HEK293 (cell line): ENCODE measurements at regions of chr11 and their contacts with region 1.

Region 1: DNA sequence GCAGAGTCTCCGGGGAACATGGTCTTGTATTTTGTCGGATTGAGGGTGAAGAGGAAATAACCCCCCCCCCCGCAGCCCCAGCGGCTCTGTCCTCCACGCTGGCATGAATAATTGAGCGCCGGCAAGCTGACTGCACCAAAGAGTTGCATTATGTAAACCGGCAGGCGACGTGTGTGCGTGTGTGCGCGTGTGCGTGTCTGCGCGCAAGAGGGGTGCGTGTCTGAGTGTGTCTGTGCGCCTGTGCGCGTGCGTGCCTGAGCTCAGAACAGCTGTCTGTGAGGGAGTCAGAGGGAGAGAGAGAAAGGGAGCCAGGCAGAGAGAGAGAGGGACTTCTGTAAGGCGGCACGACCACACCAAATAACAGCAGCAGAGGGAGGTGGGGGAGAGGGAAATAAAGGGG is 94.4 kb downstream of the SCN3B start:
- H3K4me3 ChIP-seq: no peak overlapping the region
- H3K27ac ChIP-seq: no peak overlapping the region
- H3K4me1 ChIP-seq: peaks cover 2% of the 10 kb centered on the region; the same call in 1 of the 2 replicates
- CTCF ChIP-seq: no peak

Region 2: DNA sequence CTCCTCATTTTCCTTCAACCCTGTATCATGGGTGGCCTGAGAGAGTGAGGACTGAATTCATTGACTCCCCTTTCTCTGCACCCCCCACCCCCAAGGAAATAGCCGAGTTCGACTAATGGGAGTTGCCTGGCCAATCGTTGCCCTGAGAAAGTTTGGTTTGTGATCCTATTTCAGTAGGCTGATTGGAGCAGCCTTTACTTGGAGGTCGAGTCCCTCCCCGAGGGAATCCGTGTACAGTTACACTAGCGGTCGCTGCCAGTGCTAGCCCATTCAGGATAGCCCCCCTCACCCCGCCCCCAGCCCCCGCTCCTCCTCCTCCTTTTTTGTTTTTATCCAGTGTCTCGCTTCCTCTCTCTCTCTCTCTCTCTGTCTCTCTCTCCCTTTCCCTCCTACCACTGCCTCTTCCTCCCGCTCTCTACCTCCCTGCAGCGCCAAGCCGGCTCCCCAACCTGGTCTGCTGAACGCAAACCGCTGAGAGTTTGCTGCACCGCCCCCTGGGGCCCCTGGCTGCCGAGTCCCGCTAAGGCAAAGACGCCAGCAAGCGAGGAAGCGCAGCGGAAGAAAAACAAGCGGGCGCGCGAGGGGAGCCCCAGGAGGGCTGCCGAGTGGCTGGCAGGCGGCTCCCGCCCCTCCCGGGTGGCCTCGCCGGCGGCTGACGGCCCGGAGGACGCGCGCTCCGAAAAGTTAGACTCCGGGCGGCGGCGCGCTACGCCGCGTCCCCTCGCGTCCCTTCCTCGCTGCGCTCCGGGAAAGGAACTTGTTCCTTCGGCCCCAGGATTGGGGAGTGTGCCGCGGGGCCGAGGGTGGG is 129.9 kb before region 1 on chr11 and contains the start of gene GRAMD1B:
- CTCF ChIA-PET with region 1: no interaction called
- POLR2A ChIA-PET with region 1: no interaction called
- H3K4me3 ChIP-seq: peak within 1 kb of the TSS; percentile 72
- H3K27ac ChIP-seq: peak within 1 kb of the TSS; percentile 81
- H3K4me1 ChIP-seq: no peaks in the 10 kb centered on the region
- CTCF ChIP-seq: peak; percentile 73

Region 3: GRCh38 chr11:123511037-123511870 is 48.8 kb before region 1 on chr11:
- CTCF ChIA-PET with region 1: interaction called, 17 read pairs
- POLR2A ChIA-PET with region 1: no interaction called
- H3K4me3 ChIP-seq: no peak overlapping the region
- H3K27ac ChIP-seq: no peak overlapping the region
- H3K4me1 ChIP-seq: peaks cover 4% of the 10 kb centered on the region; the same call in 1 of the 2 replicates
- CTCF ChIP-seq: peak; percentile 76

Region 4: DNA sequence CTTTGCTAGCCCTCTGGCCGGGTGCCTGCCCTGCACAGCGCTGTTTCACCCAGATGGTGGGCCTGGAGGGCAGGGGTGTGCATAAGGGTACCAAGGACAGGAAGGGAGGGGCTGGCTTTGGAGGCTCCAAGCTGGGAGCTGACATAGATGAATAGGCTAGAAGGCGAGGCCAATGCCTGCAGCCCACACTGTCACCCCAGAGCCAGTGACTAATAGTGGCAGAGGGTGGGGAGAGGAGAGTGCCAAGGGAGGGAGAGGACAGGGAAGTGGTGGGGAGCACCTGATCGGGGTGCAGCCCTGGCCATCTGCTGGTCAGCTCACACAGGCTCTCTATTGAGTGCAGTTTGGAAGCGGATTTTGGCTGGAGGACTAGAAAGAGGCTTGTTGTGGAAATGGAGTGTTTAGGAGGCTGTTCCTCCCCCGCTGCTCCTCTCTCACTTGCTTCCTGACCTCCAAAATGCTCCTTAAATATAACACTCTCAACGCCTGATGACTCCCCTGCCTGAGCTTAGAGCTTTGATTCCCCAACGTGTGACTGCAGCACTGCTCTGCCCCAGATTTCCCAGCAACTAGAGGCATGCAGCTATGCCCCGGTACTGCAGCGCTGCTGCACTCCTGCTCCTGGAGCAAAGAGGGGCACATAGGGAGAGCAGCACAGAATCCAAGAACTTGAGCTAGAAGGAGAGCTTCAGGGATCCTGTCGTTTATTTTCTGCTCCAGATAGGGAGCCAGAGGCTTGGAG is 40.8 kb before region 1 on chr11:
- CTCF ChIA-PET with region 1: interaction called, 12 read pairs
- POLR2A ChIA-PET with region 1: no interaction called
- H3K4me3 ChIP-seq: no peak overlapping the region
- H3K27ac ChIP-seq: no peak overlapping the region
- H3K4me1 ChIP-seq: no peaks in the 10 kb centered on the region
- CTCF ChIP-seq: no peak

Region 5: DNA sequence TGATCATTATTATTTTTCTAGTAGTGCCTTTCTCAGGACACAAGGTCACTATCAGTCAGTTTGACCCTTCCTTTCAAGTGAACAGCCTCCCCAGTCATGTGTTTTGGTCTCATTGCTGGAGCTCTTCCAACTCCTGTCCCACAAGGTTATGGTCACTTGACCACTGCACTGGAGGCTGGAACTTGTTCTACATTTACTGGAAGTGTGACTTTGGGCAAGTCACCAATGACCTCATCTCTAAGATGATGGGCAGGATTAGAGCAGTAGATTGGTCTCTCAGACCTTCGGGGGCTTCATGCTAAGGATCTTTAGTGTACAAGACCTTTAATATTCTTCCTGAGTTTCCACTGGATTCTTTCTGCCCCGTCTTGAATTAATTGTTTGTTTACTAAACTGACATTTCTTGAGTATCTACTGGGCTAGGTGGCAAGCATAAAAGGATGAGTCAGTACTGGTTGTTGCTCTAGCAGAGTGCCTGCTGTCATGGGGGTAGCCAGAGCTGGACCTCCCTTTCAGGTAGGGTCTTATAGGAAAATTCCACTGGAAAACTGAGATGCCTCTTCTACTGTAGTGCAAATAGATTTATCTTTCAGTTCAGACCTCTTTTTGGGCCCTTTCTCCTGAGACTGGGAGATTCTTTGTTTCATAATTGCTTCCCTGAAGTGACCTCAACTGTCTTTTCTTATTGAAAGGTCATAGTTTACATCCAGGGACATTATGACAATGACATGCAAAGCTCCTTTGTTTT is 23.1 kb before region 1 on chr11:
- CTCF ChIA-PET with region 1: interaction called, 24 read pairs
- POLR2A ChIA-PET with region 1: no interaction called
- H3K4me3 ChIP-seq: no peak overlapping the region
- H3K27ac ChIP-seq: no peak overlapping the region
- H3K4me1 ChIP-seq: no peaks in the 10 kb centered on the region; the same call in 1 of the 2 replicates
- CTCF ChIP-seq: no peak

Region 6: DNA sequence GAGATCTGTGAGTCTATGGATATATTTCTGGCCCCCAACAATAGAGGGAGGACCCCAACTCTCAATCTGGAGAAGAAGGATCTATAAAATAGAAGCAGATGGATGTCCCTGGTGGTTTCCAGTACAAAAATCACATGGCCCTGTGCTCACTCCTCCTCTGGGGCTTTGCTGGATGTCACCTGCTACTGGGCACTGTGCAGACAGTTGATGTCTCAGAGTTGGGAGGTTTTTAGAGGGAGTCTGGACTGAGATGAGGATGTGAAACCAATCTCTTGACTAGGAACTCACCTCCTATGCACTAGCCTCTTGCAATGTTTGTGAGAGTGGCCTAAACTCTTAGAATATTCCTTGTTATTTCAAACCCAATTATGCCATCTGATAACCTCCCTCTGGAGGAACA is 12.8 kb before region 1 on chr11:
- CTCF ChIA-PET with region 1: interaction called, 31 read pairs
- POLR2A ChIA-PET with region 1: interaction called, 3 read pairs
- H3K4me3 ChIP-seq: no peak overlapping the region
- H3K27ac ChIP-seq: no peak overlapping the region
- H3K4me1 ChIP-seq: no peaks in the 10 kb centered on the region
- CTCF ChIP-seq: no peak

Region 7: DNA sequence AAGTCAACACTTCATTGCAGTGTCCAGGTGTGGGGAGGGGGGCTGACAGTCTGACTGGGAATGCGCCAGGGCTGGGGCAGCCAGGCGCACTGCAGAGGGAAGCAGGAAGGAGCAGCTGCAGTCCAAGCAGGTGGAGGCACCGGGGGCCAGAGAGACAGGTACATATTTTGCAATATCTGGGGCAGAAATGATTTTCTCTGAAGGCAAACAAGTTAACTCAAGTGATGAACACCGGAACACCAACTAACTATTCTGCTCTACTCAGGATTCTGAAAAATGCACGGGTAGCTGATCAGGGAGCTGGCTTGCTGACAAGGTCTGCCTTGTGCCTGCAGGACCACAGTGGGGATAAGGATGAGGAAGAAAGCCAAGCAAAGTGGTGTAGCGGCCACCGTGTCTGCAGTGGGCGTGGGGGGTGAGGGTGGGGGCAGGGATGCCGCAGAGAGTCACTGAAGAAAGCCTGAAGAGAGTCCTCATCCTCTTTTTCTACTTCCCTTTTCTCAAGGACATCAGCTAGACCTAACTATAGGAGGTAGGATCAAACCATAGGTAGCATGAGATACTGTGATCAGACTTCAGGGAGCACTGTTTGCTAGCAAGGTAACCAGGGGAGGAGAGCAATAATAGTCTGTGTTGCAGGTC is 11.1 kb after region 1 on chr11:
- CTCF ChIA-PET with region 1: interaction called, 39 read pairs
- POLR2A ChIA-PET with region 1: interaction called, 3 read pairs
- H3K4me3 ChIP-seq: no peak overlapping the region
- H3K27ac ChIP-seq: no peak overlapping the region
- H3K4me1 ChIP-seq: no peaks in the 10 kb centered on the region
- CTCF ChIP-seq: no peak

Region 8: GRCh38 chr11:123580557-123581275 is 20.7 kb after region 1 on chr11:
- CTCF ChIA-PET with region 1: interaction called, 16 read pairs
- POLR2A ChIA-PET with region 1: no interaction called
- H3K4me3 ChIP-seq: no peak overlapping the region
- H3K27ac ChIP-seq: no peak overlapping the region
- H3K4me1 ChIP-seq: no peaks in the 10 kb centered on the region
- CTCF ChIP-seq: peak; percentile 96

Region 9: DNA sequence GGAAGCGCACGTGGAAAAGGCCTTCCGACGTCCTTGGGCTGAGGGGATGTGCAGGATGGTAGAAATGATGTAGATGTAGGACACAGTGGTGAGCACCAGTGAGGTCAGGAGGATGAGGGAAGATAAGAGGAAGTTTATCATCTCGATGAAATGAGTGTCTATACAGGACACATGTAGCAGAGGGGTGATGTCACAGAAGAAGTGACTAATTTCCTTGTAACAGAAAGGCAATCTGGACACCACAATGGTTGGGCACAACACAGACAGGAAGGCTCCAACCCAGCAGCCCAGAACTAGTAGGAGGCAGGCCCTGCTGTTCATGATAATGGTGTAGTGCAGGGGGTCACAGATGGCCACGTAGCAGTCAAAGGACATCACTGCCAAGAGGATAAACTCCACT is 281.2 kb after region 1 on chr11:
- CTCF ChIA-PET with region 1: no interaction called
- POLR2A ChIA-PET with region 1: no interaction called
- H3K4me3 ChIP-seq: no peak overlapping the region
- H3K27ac ChIP-seq: no peak overlapping the region
- H3K4me1 ChIP-seq: no peaks in the 10 kb centered on the region
- CTCF ChIP-seq: no peak

Region 10: GRCh38 chr11:124143034-124143433 is 583.0 kb after region 1 on chr11:
- CTCF ChIA-PET with region 1: no interaction called
- POLR2A ChIA-PET with region 1: no interaction called
- H3K4me3 ChIP-seq: no peak overlapping the region
- H3K27ac ChIP-seq: no peak overlapping the region
- H3K4me1 ChIP-seq: no peaks in the 10 kb centered on the region
- CTCF ChIP-seq: no peak